PC-9 (cell line): ENCODE measurements at regions of chr5 and their contacts with region 1.

Region 1: DNA sequence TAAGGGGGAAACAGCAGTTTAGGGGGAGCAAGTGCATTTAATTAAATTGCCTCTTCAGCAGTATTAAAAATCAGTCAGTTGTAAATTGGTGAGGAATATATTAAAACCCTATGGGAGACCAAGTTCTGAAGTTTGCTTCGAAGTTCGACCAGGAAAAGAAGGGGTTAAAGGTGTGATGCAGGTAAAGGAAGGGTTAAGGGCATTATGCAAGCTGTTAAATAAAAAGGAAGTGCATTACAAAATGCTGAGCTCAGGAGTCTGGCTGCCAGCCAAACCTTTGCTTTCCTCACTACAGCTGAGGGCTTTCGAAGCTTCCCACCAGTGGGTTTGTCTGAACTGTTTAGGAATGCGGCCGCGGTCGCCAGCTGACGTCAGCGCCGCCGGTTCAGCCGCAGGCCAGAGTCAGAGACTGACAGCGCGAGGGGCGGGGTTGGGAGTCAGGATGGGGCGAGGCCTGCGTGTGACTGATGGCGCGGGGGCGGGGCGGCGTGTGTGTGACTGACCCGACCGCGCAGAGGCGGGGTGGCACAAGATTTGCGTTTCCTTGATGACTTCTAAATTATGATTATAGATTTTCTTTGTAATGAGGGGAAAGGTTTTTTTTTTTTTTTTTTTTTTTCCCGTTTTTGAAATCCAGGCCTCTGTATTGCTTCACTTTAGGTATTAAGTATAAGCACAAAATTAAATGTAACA is 76.6 kb downstream of the ZSWIM6 start:
- DNase-seq: peak; percentile 98 to 99
- H3K4me3 ChIP-seq: peak overlapping the region; percentile 49; the same call in 1 of the 2 replicates
- H3K27ac ChIP-seq: peak overlapping the region; percentile 99
- H3K4me1 ChIP-seq: peaks cover 27% of the 10 kb centered on the region
- H3K27me3 ChIP-seq: no peaks in the 10 kb centered on the region
- CTCF ChIP-seq: no peak

Region 2: DNA sequence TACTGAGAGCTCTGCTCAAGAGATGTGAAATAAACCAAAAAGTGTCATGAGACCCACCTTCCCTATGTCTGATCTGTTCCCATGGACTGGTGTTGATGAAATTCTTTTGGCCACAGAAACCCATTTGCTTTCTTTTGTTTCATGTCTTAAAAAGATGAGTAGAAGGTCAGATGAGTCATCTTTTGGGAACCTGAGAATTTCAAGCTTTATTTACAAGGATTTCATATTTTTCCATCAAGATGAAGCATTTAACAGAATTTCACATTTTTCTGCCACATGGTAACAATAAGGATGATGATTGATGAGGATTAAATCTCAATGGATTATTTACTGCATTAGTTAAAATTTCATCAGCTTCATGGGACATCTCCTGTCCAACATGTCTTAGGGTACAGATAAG is 1046.5 kb before region 1 on chr5:
- CTCF ChIA-PET with region 1: no interaction called
- POLR2A ChIA-PET with region 1: no interaction called
- intact Hi-C with region 1: no loop called
- DNase-seq: no peak
- H3K4me3 ChIP-seq: no peak overlapping the region
- H3K27ac ChIP-seq: no peak overlapping the region
- H3K4me1 ChIP-seq: no peaks in the 10 kb centered on the region
- H3K27me3 ChIP-seq: no peaks in the 10 kb centered on the region
- CTCF ChIP-seq: no peak

Region 3: DNA sequence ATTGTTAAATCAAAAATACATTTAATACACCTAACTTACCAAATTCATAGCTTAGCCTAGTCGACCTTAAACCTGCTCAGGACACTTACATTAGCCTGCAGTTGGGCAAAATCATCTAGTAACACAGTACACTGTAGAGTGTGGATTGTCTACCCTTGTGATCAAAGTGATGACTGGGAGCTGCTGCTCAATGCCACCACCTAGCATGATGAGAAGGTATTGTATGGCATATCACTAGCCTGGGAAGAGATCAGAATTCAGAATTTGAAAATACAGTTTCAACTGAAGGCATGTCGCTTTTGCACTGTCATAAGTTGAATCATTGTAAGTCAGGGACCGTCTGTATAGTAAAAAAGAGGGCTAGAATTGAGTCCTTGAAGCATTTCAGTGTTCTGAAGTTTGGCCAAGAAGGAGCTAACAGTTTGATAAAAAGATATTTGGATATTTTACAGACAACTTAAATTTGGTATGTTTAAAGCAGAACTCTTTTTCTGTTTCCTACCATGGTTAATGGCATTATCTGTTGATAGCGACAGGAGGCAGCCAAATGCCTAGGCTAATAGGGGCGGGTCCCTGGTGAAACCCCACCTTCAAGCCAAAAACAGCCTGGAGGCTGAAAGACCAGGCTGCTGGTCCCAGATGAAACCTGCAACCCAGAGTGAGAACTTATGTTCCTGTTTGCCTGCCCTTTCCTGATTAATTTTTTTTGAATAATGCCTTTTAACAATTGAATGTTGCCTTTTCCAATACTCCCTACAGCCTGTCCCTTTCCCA is 269.3 kb before region 1 on chr5:
- CTCF ChIA-PET with region 1: no interaction called
- POLR2A ChIA-PET with region 1: no interaction called
- intact Hi-C with region 1: no loop called
- DNase-seq: no peak
- H3K4me3 ChIP-seq: no peak overlapping the region
- H3K27ac ChIP-seq: no peak overlapping the region
- H3K4me1 ChIP-seq: no peaks in the 10 kb centered on the region
- H3K27me3 ChIP-seq: no peaks in the 10 kb centered on the region
- CTCF ChIP-seq: peak; percentile 44

Region 4: DNA sequence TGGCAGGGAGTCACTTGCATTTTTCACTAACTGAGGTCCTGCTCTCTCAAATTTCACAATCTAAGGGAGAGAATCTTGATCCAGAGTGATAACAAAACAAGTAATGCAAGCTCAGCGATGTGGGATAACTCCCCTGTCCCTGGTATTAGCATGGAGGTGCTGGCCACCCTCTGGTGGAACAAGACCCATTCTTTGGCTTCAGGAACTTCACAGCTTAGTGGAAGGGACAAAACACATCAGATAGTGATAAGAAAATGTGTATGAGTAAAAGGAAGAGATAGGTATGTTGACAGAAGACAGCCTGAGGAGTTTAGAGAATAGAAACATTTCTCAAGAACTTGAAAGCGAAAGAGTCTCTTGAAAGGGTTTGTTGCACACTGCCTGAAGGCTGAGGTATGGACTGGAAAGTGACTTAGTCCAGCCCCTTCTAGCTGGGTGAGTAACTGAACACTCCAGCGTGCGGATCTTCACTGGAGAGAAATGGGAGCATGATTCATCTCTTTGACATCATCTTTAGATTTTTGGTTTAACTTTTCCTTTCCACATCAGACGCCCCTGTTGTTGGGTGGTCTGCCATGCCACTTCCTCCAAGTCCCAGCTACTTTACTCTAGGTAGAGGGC is 102.0 kb before region 1 on chr5:
- CTCF ChIA-PET with region 1: no interaction called
- POLR2A ChIA-PET with region 1: interaction called, 26 read pairs
- intact Hi-C with region 1: loop called (anchors 2 kb)
- DNase-seq: peak in 1 of 2 experiments; percentile 76
- H3K4me3 ChIP-seq: no peak overlapping the region
- H3K27ac ChIP-seq: no peak overlapping the region
- H3K4me1 ChIP-seq: peaks cover 71% of the 10 kb centered on the region
- H3K27me3 ChIP-seq: no peaks in the 10 kb centered on the region
- CTCF ChIP-seq: no peak

Region 5: DNA sequence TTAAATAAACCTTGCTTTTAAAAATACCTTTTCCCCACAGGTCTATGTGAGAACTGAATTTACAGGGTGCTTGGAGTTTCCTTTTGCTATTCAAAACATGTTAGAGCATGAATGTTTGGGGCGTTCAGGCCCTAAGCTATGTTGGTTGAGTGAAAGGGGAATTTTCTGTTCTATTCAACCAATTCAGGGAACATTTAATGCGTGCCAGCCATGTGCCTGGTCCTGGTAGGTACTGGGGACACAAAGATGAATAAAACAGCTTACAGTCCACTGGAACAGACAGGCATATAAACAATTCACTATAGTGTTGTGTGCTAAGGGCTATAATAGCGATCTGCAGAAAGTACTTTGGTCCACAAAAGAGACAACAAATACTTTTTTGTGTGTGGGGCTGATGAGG is 32.0 kb after region 1 on chr5:
- CTCF ChIA-PET with region 1: interaction called, 12 read pairs
- POLR2A ChIA-PET with region 1: no interaction called
- intact Hi-C with region 1: no loop called
- DNase-seq: no peak
- H3K4me3 ChIP-seq: no peak overlapping the region
- H3K27ac ChIP-seq: no peak overlapping the region
- H3K4me1 ChIP-seq: no peaks in the 10 kb centered on the region
- H3K27me3 ChIP-seq: no peaks in the 10 kb centered on the region
- CTCF ChIP-seq: no peak

Region 6: GRCh38 chr5:61534481-61535267 is 126.1 kb after region 1 on chr5:
- CTCF ChIA-PET with region 1: no interaction called
- POLR2A ChIA-PET with region 1: no interaction called
- intact Hi-C with region 1: loop called (anchors 5 kb)
- DNase-seq: no peak
- H3K4me3 ChIP-seq: no peak overlapping the region
- H3K27ac ChIP-seq: no peak overlapping the region
- H3K4me1 ChIP-seq: peaks cover 9% of the 10 kb centered on the region
- H3K27me3 ChIP-seq: no peaks in the 10 kb centered on the region
- CTCF ChIP-seq: no peak